CD8-positive, alpha-beta memory T cell (primary cell): ENCODE measurements at regions of chr12 and their contacts with region 1.

Region 1: GRCh38 chr12:121230538-121230907 is 20.6 kb downstream of the P2RX4 start:
- DNase-seq: no peak
- H3K4me3 ChIP-seq: no peak overlapping the region
- H3K4me3 Mint-ChIP-seq: no peak overlapping the region
- H3K27ac ChIP-seq: no peak overlapping the region
- H3K27ac Mint-ChIP-seq: peak overlapping the region in 6 of 8 donors; percentile 7 to 83 (median 52)
- H3K4me1 ChIP-seq: peaks cover 19% of the 10 kb centered on the region
- H3K4me1 Mint-ChIP-seq: peaks cover 10 to 22% (median 11%) of the 10 kb centered on the region in 3 donors
- H3K27me3 ChIP-seq: no peaks in the 10 kb centered on the region
- H3K27me3 Mint-ChIP-seq: no peaks in the 10 kb centered on the region

Region 2: DNA sequence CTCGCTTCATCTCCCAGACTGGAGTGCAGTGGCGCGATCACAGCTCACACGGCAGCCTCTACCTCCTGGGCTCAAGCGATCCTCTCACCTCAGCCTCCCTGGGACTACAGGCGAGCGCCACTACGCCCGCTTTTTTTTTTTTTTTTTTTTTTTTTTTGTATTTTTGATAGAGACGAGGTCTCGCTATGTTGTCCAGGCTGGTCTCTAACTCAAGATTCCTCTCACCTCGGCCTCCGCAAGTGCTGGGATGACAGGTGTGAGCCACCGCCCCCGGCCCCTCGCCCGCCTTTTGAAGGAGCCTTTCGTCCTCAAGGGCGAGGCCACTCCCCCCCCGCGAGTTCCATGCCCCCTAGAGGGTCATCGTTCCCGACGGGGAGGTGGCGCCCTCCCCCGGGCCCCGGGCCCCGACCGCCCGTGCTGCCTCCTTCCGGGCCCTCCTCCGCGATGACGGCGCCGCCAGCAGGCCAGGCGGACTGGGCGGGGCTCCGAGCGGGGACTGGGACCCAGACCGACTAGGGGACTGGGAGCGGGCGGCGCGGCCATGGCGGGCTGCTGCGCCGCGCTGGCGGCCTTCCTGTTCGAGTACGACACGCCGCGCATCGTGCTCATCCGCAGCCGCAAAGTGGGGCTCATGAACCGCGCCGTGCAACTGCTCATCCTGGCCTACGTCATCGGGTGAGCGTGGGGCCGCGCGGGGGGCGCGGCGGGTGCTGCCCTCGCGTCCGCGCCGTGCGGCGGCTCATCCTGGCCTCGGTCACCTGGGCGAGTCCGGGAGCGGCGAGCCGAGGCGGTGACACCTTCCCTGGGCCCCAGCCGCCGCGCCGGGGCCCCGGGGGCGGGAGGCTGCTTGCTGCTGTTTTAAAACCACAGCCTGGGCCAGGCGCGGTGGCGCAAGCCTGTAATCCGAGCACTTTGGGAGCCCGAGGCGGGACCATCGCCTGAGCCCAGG is 20.6 kb before region 1 on chr12 and contains the start of gene P2RX4:
- CTCF ChIA-PET with region 1: interaction called, 10 read pairs
- POLR2A ChIA-PET with region 1: no interaction called
- DNase-seq: peak; percentile 79 to 92 (median 89)
- H3K4me3 ChIP-seq: peak within 1 kb of the TSS; percentile 65
- H3K4me3 Mint-ChIP-seq: peak within 1 kb of the TSS; percentile 82 to 97 (median 91)
- H3K27ac ChIP-seq: peak within 1 kb of the TSS; percentile 90
- H3K27ac Mint-ChIP-seq: peak within 1 kb of the TSS; percentile 90 to 99 (median 96)
- H3K4me1 ChIP-seq: peaks cover 16% of the 10 kb centered on the region
- H3K4me1 Mint-ChIP-seq: peaks cover 22 to 41% (median 22%) of the 10 kb centered on the region in 3 donors
- H3K27me3 ChIP-seq: no peaks in the 10 kb centered on the region
- H3K27me3 Mint-ChIP-seq: no peaks in the 10 kb centered on the region
- total RNA-seq, gene P2RX4: 39.2 to 40.3 TPM

Region 3: DNA sequence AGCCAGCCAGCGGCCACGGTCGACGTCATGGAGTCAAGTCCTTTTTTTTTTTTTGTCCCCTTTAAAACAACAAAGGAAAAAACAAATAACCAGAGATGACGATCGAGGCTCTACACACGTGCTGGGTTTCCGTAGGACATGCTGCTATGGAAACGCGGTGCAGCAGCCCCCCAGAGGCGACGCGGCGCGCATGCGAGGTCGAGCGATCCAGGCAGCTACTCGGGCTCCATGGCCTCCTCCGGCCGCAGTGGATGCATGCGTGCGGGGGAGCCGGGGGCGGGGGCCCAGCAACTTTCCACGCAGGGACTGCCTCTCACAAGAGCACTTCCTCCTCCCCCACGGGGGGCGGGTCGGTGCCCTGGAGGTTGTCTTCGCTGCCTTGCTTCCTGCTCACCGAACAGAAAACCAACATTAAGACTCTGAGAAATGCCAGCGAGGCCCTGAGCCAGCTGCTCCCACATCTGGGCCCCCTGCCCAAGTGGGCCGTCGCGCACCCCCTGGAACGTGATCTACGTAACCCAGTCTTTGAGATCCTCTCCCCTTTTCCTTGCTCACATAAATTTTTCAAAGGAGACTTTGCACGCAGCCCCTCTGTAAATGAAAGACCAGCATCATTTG is 10.1 kb after region 1 on chr12:
- CTCF ChIA-PET with region 1: interaction called, 27 read pairs
- POLR2A ChIA-PET with region 1: interaction called, 3 read pairs
- DNase-seq: peak; percentile 84 to 100 (median 95)
- H3K4me3 ChIP-seq: peak overlapping the region; percentile 56
- H3K4me3 Mint-ChIP-seq: peak overlapping the region; percentile 67 to 96 (median 88)
- H3K27ac ChIP-seq: peak overlapping the region; percentile 49
- H3K27ac Mint-ChIP-seq: peak overlapping the region; percentile 98 to 100 (median 99)
- H3K4me1 ChIP-seq: peaks cover 37% of the 10 kb centered on the region
- H3K4me1 Mint-ChIP-seq: peaks cover 31 to 52% (median 35%) of the 10 kb centered on the region in 3 donors
- H3K27me3 ChIP-seq: no peaks in the 10 kb centered on the region
- H3K27me3 Mint-ChIP-seq: no peaks in the 10 kb centered on the region

Region 4: DNA sequence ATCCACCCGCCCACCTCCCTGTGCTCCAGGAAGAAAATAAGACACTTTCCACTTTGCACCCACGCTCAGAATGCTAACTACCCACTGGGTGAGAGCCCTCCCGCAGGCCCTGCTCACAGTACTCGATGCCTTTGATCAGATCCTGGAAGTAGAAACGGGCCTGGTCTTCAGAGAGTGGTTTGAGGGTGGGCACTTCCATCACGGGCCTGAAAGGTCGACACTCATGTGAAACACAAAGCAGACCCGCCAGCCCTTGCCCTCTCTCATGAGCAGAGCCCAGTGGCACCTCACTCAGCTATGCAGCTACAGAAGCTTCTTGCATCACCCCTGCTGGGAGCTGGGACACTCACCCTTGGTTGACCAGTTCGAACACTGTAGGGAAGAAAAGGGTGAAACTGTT is 24.9 kb after region 1 on chr12:
- CTCF ChIA-PET with region 1: no interaction called
- POLR2A ChIA-PET with region 1: no interaction called
- DNase-seq: no peak
- H3K4me3 ChIP-seq: no peak overlapping the region
- H3K4me3 Mint-ChIP-seq: no peak overlapping the region
- H3K27ac ChIP-seq: no peak overlapping the region
- H3K27ac Mint-ChIP-seq: peak overlapping the region in 2 of 8 donors; percentile 12 to 29
- H3K4me1 ChIP-seq: no peaks in the 10 kb centered on the region
- H3K4me1 Mint-ChIP-seq: no peaks in the 10 kb centered on the region
- H3K27me3 ChIP-seq: no peaks in the 10 kb centered on the region
- H3K27me3 Mint-ChIP-seq: peaks cover 0 to 3% of the 10 kb centered on the region in 2 donors